Ascending aorta (tissue), 2 donors: ENCODE measurements at regions of chr3 and their contacts with region 1.

Region 1: GRCh38 chr3:129490242-129491045 is 38.0 kb upstream of the RHO start:
- DNase-seq: peak; percentile 83 to 93
- H3K4me3 ChIP-seq: no peak overlapping the region
- H3K27ac ChIP-seq: peak overlapping the region; percentile 86 to 90
- H3K4me1 ChIP-seq: peaks cover 15 to 34% of the 10 kb centered on the region in 2 donors
- H3K27me3 ChIP-seq: no peaks in the 10 kb centered on the region
- CTCF ChIP-seq: peak; percentile 83 to 87 (median 87)

Region 2: GRCh38 chr3:129278971-129279906 is 211.2 kb before region 1 on chr3:
- intact Hi-C with region 1: no loop called
- DNase-seq: no peak
- H3K4me3 ChIP-seq: peak overlapping the region; percentile 60 to 93
- H3K27ac ChIP-seq: peak overlapping the region; percentile 95 to 98
- H3K4me1 ChIP-seq: peaks cover 0 to 14% of the 10 kb centered on the region in 2 donors
- H3K27me3 ChIP-seq: no peaks in the 10 kb centered on the region
- CTCF ChIP-seq: no peak

Region 3: GRCh38 chr3:129560901-129561594 is 70.6 kb after region 1 on chr3:
- intact Hi-C with region 1: loop called (anchors 2 kb)
- DNase-seq: peak; percentile 69 to 93
- H3K4me3 ChIP-seq: peak overlapping the region; percentile 6 to 57
- H3K27ac ChIP-seq: peak overlapping the region; percentile 91 to 93
- H3K4me1 ChIP-seq: peaks cover 29 to 64% of the 10 kb centered on the region in 2 donors
- H3K27me3 ChIP-seq: no peaks in the 10 kb centered on the region
- CTCF ChIP-seq: no peak

Region 4: GRCh38 chr3:129606636-129607390 is 116.4 kb after region 1 on chr3 and contains the start of gene PLXND1:
- intact Hi-C with region 1: loop called (anchors 2 kb)
- DNase-seq: peak in 1 of 2 donors; percentile 87
- H3K4me3 ChIP-seq: peak within 1 kb of the TSS; percentile 84 to 90
- H3K27ac ChIP-seq: peak within 1 kb of the TSS; percentile 94
- H3K4me1 ChIP-seq: peaks cover 28 to 62% of the 10 kb centered on the region in 2 donors
- H3K27me3 ChIP-seq: no peaks in the 10 kb centered on the region
- CTCF ChIP-seq: no peak
- total RNA-seq, gene PLXND1: 407 TPM

Region 5: DNA sequence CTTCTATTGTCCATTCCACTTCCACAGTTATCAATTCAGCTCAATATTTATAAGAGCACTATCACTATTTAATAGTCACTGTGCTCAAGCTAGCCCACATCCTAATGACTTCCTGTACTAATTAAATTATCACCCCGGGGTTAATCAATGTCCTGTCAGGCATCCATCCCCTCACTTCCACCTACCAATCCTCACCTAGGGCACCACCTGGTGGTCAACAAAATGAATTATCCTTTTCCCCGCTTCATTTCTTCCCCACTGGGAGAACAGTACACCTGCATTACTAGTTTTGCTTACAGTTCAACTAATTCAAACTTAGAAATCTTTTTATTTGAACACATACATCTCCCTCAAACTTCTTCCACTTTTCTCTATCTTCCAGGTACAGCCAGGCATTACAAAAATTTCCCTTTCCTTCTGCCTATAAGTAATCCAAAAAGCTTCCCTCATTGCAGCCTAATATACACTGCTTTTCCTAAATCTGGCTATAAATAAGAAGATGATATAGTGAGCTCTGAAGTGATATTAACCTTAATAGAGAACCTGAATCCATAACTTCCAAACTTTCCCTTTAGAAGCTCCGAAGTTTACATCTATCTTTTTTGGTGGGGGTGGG is 334.6 kb after region 1 on chr3:
- intact Hi-C with region 1: loop called (anchors 2 kb)
- DNase-seq: no peak
- H3K4me3 ChIP-seq: no peak overlapping the region
- H3K27ac ChIP-seq: no peak overlapping the region
- H3K4me1 ChIP-seq: no peaks in the 10 kb centered on the region
- H3K27me3 ChIP-seq: no peaks in the 10 kb centered on the region
- CTCF ChIP-seq: peak; percentile 41 to 63 (median 63)

Region 6: DNA sequence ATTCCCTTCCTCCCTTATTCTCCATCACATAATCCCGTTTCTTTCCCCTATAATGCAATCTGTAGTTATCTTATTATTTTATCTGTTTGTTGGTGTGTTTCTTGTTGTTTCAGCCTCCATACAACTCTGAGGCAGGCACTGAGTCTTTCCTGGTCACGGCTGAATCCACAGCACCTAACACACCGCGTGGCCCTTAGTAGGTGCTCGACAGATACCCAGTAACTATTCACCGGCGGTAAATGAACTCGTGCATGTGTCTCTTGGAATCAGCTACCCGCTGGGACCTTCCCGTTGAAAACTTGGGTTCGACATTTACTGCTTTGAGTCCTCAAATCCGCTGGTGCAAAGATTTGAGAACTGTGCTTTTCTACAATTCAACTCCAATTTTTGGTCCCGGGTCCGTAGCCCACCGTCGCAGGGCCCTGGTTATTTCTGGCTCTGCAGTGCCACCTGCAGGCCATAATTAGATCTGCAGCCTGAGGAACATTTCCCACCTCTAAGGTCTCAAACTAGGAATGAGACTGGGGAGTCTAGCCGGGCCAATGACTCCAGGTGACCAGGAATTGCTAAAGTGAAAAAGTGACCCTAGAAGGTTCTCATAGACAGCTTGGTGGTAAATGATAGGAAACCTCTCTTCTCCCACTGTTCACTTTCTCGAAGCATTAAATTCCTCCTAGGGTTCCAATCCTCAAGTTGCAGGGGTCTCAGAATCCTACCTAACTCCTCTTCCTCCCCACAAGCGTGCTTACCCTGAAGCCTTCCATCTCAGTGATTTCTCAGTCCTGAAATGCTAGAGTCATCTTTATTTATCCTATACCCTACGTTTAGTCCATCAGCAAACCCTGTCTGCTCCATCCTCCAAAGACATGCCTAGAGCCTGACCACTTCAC is 444.0 kb after region 1 on chr3:
- intact Hi-C with region 1: loop called (anchors 2 kb)
- DNase-seq: no peak
- H3K4me3 ChIP-seq: peak overlapping the region in 1 of 2 donors; percentile 43
- H3K27ac ChIP-seq: no peak overlapping the region
- H3K4me1 ChIP-seq: no peaks in the 10 kb centered on the region
- H3K27me3 ChIP-seq: no peaks in the 10 kb centered on the region
- CTCF ChIP-seq: peak; percentile 81 to 91 (median 89)